Colonic mucosa (tissue), 4 donors: ENCODE measurements at regions of chr7 and their contacts with region 1.

Region 1: GRCh38 chr7:27108390-27109127 is 6.1 kb upstream of the HOXA2 start:
- DNase-seq: peak; percentile 68
- H3K4me3 ChIP-seq: peak overlapping the region; percentile 3
- H3K27ac ChIP-seq: peak overlapping the region; percentile 92
- H3K4me1 ChIP-seq: peaks cover 9% of the 10 kb centered on the region
- H3K27me3 ChIP-seq: no peaks in the 10 kb centered on the region
- CTCF ChIP-seq: no peak

Region 2: DNA sequence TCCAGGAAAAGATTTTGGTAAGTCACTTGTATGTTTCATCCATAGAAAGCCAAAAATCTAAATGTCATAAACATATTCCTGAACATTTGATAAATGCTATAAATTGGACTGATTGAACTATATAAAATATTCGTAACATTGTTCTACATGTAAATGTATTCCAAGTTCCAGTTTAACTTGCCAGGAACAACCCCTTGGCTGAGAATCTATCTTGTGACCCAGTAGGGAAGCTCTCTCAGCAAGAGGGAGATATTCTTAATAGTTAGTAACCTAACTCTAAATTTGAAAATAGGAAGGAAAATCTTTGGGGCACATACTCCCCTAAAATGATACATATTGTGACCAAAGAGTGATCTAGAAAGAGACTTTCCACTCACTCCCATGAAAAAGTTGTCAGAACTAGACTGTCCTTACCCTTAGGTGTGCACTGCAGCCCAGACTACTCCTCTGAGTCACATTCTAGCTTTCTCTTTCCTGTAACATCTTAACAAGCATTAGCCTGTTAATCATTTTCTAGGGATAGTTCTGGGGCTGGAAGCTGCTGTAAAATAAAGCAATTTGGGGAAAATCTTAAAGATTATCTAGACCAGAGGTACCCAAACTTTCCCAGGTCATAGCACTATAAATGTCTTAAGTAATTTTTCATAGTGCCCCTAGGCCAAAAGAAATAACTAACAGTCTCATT is 170.5 kb before region 1 on chr7:
- intact Hi-C with region 1: no loop called
- DNase-seq: no peak
- H3K4me3 ChIP-seq: no peak overlapping the region
- H3K27ac ChIP-seq: no peak overlapping the region
- H3K4me1 ChIP-seq: no peaks in the 10 kb centered on the region
- H3K27me3 ChIP-seq: no peaks in the 10 kb centered on the region
- CTCF ChIP-seq: no peak

Region 3: DNA sequence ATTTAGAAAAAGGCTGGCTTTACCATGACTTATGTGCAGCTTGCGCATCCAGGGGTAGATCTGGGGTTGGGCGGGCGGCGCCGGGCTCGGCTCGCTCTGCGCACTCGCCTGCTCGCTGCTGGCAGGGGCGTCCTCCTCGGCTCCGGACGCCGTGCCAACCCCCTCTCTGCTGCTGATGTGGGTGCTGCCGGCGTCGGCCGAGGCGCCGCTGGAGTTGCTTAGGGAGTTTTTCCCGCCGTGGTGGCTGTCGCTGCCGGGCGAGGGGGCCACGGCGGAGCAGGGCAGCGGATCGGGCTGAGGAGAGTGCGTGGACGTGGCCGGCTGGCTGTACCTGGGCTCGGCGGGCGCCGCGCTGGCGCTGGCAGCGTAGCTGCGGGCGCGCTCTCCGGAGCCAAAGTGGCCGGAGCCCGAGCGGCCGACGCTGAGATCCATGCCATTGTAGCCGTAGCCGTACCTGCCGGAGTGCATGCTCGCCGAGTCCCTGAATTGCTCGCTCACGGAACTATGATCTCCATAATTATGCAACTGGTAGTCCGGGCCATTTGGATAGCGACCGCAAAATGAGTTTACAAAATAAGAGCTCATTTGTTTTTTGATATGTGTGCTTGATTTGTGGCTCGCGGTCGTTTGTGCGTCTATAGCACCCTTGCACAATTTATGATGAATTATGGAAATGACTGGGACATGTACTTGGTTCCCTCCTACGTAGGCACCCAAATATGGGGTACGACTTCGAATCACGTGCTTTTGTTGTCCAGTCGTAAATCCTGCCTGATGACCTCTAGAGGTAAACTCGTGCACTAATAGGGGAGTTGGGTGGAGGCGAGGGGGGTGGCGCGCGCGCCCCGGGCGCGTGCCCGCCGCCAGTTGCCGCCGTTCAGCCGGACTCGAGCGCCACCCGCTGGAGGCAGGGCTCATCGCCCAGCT is 34.7 kb after region 1 on chr7 and contains the start of gene HOXA5:
- intact Hi-C with region 1: loop called (anchors 5 kb)
- DNase-seq: peak; percentile 85
- H3K4me3 ChIP-seq: peak within 1 kb of the TSS; percentile 43
- H3K27ac ChIP-seq: peak within 1 kb of the TSS; percentile 84
- H3K4me1 ChIP-seq: peaks cover 17% of the 10 kb centered on the region
- H3K27me3 ChIP-seq: no peaks in the 10 kb centered on the region
- CTCF ChIP-seq: peak; percentile 80
- total RNA-seq, gene HOXA5: 9.6 to 18.7 TPM

Region 4: DNA sequence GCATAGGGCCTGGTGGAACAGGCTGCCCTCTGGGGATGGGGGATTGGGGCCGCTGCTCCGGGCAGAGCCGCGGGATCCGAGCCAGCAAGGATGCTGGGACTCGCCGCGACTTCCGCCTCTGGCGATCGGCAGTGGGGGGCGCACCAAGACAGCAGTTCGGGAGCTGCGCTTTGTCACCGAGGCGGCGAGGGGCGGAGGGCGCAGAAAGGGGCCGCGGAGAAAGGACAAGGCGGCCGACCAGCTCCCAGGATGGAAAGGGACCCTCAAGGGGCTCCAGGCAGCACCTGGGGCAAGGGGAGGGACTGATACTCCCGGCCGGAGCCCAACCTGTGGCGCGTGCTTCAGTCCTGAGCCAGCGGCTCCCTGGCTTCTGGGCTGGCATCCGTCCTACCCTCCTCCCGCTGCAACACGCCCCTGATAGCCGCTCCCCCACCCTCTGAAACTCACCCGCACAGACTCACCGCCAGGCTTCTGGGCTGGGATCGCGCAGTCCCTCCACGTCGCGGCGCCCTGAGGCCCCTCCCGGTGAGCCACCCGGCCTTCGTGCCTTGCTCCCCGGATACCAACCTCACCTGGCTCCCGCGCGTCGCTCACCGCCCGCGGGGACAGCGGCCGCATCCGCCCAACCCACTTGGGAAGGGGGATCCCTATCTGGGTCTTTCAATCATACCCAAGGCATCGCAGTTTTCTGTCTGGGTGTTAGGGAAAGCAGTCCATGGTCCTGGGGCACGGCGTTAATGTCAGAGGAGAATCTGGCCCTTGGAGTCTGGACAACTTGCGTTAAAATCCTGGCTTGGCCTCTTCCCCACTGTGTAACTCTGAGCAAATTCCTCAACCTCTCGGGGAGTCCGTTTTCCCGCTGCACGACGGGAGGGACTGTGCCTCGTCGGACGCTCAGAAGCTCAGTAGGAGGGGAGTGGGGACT is 127.1 kb after region 1 on chr7:
- intact Hi-C with region 1: no loop called
- DNase-seq: peak; percentile 75
- H3K4me3 ChIP-seq: peak overlapping the region; percentile 41
- H3K27ac ChIP-seq: no peak overlapping the region
- H3K4me1 ChIP-seq: no peaks in the 10 kb centered on the region
- H3K27me3 ChIP-seq: peaks cover 22% of the 10 kb centered on the region
- CTCF ChIP-seq: peak; percentile 45